IMR-90 (cell line): ENCODE measurements at regions of chr3 and their contacts with region 1.

Region 1: DNA sequence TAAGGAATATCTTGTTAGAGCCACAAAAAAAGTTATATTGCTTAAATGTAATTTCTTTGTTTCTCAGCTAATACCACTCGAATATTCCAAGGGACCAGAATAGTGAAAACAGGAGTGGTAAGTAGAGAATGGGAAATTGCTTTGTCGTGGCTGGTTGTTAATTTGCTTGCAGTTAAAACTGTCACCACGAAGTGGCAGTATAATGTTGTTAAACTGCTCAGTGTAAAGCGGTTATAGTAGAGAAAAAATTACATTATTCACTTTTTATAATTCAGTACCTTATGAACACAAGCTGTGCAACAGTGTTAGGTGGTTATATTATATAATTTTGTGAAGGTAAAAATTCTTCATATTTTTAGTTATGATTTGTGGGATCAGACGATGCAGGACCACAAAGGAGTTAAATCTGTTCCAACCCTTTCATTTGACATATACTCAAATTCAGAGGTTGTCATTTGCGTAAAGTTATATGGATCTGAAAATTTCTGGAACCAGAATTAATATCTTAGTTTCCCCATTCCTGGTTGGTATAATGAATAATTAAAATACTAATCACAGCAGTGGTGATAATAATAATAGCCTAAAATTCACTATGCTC is 171.8 kb downstream of the FEZF2 start:
- DNase-seq: peak; percentile 51
- ATAC-seq: peak; percentile 94
- H3K4me3 ChIP-seq: no peak overlapping the region
- H3K27ac ChIP-seq: no peak overlapping the region
- H3K4me1 ChIP-seq: no peaks in the 10 kb centered on the region
- H3K27me3 ChIP-seq: no peaks in the 10 kb centered on the region
- CTCF ChIP-seq: peak; percentile 60
- POLR2A ChIP-seq: no peak
- RAD21 ChIP-seq: peak; percentile 52

Region 2: DNA sequence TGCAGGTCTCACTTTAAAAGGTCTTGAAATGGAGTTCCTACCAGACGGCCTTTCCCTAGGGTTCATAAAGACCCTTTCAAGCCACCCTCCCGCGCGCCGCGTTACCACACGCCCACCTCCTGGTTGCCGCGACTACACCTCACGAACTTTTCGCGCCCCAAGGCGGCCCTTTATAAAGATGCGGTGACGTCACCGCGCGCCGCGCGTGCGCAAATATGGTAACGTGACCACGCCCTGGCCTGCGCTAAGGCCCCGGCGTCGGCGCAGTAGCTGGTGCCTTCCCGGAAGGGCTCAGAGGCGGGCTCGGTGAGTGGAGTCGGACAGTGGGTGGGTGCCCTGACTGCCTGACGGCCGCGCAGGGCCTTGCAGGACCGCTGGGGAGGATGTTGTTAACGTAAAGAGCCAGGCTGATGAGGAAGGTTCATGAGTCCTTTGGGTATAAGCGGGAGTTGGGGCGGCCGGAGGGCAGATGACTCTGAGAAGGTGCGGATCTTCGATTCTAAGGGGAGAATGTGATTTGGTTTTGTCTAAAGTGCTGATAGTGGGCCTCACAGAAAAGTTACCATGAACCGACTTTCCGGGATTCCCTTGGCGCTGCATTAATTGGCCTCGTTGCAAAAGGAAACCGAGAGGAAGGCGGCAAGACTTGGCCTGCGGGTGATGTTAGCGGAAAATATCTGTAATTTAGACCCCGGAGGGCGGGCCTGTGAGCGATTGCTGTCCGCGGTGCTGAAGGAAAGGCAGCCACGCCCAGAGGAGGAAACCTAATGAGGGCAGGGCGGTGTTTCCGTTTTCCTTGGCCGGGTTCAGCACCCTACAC is 117.4 kb after region 1 on chr3:
- CTCF ChIA-PET with region 1: no interaction called
- POLR2A ChIA-PET with region 1: no interaction called
- dilution Hi-C with region 1: no loop called
- in situ Hi-C with region 1: no loop called
- intact Hi-C with region 1: loop called (anchors 2 kb)
- DNase-seq: peak; percentile 79
- ATAC-seq: peak; percentile 100
- H3K4me3 ChIP-seq: peak overlapping the region; percentile 78
- H3K27ac ChIP-seq: peak overlapping the region; percentile 47
- H3K4me1 ChIP-seq: no peaks in the 10 kb centered on the region
- H3K27me3 ChIP-seq: no peaks in the 10 kb centered on the region
- CTCF ChIP-seq: no peak
- POLR2A ChIP-seq: peak; percentile 23; the same call in 1 of the 2 replicates
- RAD21 ChIP-seq: no peak

Region 3: GRCh38 chr3:62332835-62333244 is 131.3 kb after region 1 on chr3:
- CTCF ChIA-PET with region 1: interaction called, 3 read pairs
- POLR2A ChIA-PET with region 1: no interaction called
- dilution Hi-C with region 1: no loop called
- in situ Hi-C with region 1: no loop called
- intact Hi-C with region 1: loop called (anchors 5 kb)
- DNase-seq: peak; percentile 23
- ATAC-seq: no peak
- H3K4me3 ChIP-seq: no peak overlapping the region
- H3K27ac ChIP-seq: no peak overlapping the region
- H3K4me1 ChIP-seq: no peaks in the 10 kb centered on the region
- H3K27me3 ChIP-seq: no peaks in the 10 kb centered on the region
- CTCF ChIP-seq: peak; percentile 54
- POLR2A ChIP-seq: no peak
- RAD21 ChIP-seq: 0 out of 2 replicates have a peak, but pooled peaks have one; percentile 12

Region 4: DNA sequence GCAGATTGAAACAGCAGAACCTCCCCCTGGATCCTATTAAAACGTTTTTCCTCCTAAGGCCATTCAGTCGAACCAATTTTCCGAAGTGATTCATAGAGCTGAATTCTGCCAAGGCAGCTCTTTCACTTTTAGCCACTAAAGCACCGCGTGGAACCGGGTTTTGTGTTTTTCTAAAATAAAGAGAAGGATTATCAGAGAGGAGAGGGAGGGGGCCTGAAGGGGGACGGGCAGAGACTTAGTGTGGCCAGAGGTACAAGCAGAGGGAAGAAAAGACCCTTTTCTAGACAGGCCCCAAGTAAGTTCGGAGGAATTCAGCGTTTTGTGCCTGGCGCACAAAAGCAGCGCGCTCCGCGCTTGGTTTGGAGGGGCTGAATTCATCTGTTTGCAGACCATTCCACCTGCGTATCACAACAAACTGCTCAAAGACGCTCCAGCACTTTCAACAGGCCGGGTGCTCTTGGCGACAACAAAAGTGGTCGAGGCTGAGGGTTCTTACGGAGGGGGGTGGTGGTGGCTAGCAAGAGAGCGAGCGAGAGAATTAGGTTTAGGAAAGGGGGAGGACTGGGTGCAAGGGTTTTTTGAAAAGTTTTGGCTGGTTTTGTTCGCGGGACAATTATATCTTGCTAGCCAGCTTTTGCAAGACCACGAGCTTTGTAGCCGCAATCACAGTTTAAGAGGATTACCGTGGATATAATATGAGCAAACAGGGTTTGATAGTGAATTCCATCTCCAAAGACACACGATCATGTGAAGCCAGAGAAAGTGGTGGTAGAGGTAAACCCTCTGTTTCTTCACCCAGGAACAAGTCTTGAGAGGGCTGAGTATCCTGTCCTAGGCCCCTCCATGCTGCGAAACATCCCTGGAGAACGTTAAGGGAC is 173.0 kb after region 1 on chr3:
- CTCF ChIA-PET with region 1: no interaction called
- POLR2A ChIA-PET with region 1: no interaction called
- dilution Hi-C with region 1: no loop called
- in situ Hi-C with region 1: no loop called
- intact Hi-C with region 1: no loop called
- DNase-seq: peak; percentile 6
- ATAC-seq: 0 out of 2 replicates have a peak, but pooled peaks have one; percentile 30
- H3K4me3 ChIP-seq: no peak overlapping the region
- H3K27ac ChIP-seq: no peak overlapping the region
- H3K4me1 ChIP-seq: no peaks in the 10 kb centered on the region
- H3K27me3 ChIP-seq: peaks cover 92% of the 10 kb centered on the region
- CTCF ChIP-seq: no peak
- POLR2A ChIP-seq: no peak
- RAD21 ChIP-seq: no peak

Region 5: DNA sequence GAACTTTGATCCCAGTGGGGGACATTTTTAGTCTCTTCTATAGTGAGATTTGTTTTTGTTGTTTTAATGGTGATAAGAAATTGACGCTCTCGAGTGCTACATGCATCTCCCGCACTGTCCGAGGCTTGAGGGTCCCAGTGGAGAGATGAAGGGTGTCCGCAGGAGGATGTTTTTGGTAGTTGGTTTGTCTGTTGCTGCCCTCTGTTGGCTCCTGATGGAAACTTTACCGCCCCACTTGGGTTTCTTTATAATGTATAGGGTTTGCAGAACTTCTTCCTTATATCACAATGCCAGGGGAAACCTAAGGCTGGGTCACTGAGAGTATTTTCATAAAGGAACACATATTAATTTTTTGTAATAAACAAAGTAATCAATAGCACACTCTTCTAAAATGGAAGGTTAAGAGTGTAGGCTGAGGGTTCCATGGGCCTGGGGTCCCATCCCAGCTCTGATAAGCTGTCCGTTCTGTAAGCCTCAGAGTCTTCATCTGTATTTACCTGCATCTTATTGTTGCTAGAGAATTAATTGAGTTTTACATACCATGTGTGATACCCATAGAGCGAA is 357.1 kb after region 1 on chr3:
- CTCF ChIA-PET with region 1: interaction called, 4 read pairs
- POLR2A ChIA-PET with region 1: no interaction called
- dilution Hi-C with region 1: no loop called
- in situ Hi-C with region 1: loop called (anchors 10 kb)
- intact Hi-C with region 1: loop called (anchors 1 kb)
- DNase-seq: peak; percentile 13
- ATAC-seq: peak; percentile 63; the same call in 1 of the 2 replicates
- H3K4me3 ChIP-seq: no peak overlapping the region
- H3K27ac ChIP-seq: no peak overlapping the region
- H3K4me1 ChIP-seq: peaks cover 2% of the 10 kb centered on the region; the same call in 1 of the 2 replicates
- H3K27me3 ChIP-seq: peaks cover 2% of the 10 kb centered on the region
- CTCF ChIP-seq: peak; percentile 50
- POLR2A ChIP-seq: no peak
- RAD21 ChIP-seq: peak; percentile 33